GM18951 (cell line): ENCODE measurements at regions of chr3 and their contacts with region 1.

Region 1: DNA sequence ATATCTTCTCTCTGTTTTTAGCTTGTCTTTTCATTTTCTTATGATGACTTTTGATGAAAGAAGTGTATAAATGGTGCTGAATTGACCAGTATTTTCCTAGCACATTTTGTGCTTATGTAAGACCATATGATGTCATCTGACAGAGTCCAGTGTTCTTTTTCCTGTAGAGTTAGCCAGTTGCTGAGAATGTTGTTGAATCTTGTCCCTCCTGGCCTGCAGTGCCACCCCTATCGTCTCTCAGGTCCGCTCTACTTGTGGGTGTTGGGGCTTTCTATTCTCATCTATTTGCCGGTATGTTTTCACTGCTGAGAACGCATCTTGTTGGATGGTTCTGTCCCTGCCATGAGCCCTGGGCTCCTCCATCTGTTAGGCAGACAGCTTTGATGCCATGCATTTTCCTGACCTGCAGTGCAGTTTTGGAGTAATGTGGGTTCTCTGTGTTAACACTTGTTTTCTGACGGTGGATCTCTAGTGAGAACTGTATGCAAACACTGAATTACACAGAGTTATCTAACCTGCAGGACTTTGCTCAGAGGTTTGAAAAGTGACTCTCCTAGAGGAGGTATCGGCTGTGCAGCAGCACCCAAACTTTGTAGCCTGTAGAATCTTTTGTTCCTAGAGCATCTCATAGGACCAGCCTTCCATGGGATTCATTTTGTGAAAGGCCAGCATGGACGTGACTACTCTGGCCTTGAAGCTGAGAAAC is 44.6 kb downstream of the SLC6A20 start:
- POLR2A ChIP-seq: no peak

Region 2: GRCh38 chr3:45167011-45167911 is 584.4 kb before region 1 on chr3:
- in situ Hi-C with region 1: no loop called
- POLR2A ChIP-seq: no peak

Region 3: GRCh38 chr3:45923755-45924154 is 172.1 kb after region 1 on chr3:
- in situ Hi-C with region 1: loop called (anchors 5 kb)
- POLR2A ChIP-seq: no peak